ENCODE measurements at regions of chr5 and their contacts with region 1.

Region 1: DNA sequence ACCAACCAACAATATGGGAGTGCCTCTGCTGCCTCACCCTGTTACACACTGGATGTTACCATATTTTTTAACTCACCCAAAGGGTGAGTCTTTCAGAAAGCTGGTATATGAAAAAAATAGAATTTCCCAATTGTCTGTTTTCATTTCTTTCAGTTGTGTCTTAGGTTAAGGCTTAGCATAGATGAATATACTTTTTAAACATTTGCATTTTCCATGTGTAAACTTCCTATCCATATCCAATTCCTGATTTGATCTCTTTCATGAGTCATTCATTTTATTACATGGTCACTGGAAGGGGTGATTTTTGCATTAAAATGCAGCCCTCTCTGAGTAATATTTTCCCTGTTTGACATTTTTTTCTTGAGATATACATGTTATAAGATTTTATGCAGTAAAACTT is 406.5 kb downstream of the SEMA5A start:
- DNase-seq: no peak
- ATAC-seq: no peak
- H3K4me3 ChIP-seq: no peak overlapping the region
- H3K27ac ChIP-seq: no peak overlapping the region
- H3K4me1 ChIP-seq: no peaks in the 10 kb centered on the region
- H3K27me3 ChIP-seq: no peaks in the 10 kb centered on the region
- CTCF ChIP-seq: no peak

Region 2: DNA sequence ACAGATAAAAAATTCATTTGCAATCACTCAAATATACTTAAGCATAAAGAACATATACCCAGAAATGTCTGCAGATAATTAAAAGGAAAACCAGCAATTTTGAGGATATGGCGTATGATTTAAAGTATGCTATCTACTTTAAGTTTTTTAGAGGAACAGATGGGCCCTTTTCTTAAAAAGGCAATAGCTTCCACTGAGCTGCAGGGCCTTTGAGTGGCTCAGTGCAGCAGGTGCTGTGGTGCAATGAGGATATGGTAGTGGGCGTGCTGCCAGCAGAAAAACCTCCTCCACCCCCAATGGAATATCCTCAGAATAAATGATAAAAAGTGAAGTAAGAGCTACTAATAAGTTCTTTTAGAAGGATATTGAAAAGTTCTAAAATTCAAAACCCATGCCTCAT is 455.8 kb before region 1 on chr5:
- intact Hi-C with region 1: no loop called
- DNase-seq: no peak
- ATAC-seq: no peak
- H3K4me3 ChIP-seq: no peak overlapping the region
- H3K27ac ChIP-seq: no peak overlapping the region
- H3K4me1 ChIP-seq: peaks cover 0 to 15% (median 0%) of the 10 kb centered on the region in 9 donors
- H3K27me3 ChIP-seq: no peaks in the 10 kb centered on the region
- CTCF ChIP-seq: no peak

Region 3: DNA sequence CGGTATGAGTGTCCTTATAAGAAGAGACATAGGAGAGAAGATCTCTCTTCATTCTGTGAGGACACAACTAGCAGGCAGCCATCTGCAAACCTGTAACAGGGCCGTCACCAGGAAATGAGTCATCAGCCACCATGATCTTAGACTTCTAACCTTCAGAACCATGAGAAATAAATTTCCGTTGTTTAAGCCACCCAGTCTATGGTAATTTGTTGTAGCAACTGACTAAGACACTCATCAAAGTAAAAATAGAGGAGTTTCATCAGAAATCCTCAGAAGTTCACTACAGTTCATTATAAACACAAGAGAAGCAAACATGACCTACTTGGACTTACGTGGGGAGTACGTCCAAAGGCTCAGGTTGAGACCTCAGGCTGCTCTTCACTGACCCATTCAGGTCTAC is 48.8 kb after region 1 on chr5:
- intact Hi-C with region 1: no loop called
- DNase-seq: no peak
- ATAC-seq: peak in 1 of 8 donors; percentile 58
- H3K4me3 ChIP-seq: no peak overlapping the region
- H3K27ac ChIP-seq: peak overlapping the region in 1 of 10 donors; percentile 47
- H3K4me1 ChIP-seq: peaks cover 0 to 2% (median 0%) of the 10 kb centered on the region in 9 donors
- H3K27me3 ChIP-seq: no peaks in the 10 kb centered on the region
- CTCF ChIP-seq: no peak

Region 4: GRCh38 chr5:10671041-10672008 is 1532.0 kb after region 1 on chr5:
- intact Hi-C with region 1: loop called in 1 of 10 experiments (anchors 10 kb)
- DNase-seq: no peak
- ATAC-seq: no peak
- H3K4me3 ChIP-seq: no peak overlapping the region
- H3K27ac ChIP-seq: no peak overlapping the region
- H3K4me1 ChIP-seq: no peaks in the 10 kb centered on the region
- H3K27me3 ChIP-seq: peaks cover 0 to 13% (median 0%) of the 10 kb centered on the region in 7 donors
- CTCF ChIP-seq: no peak